ENCODE measurements at regions of chr13 and their contacts with region 1.

Region 1: GRCh38 chr13:98653463-98653985 is 76.6 kb upstream of the STK24 start:
- DNase-seq: peak; percentile 84 to 92 (median 85)
- H3K4me3 ChIP-seq: no peak overlapping the region
- H3K27ac ChIP-seq: no peak overlapping the region
- H3K4me1 ChIP-seq: no peaks in the 10 kb centered on the region
- H3K27me3 ChIP-seq: no peaks in the 10 kb centered on the region
- CTCF ChIP-seq: peak; percentile 87

Region 2: DNA sequence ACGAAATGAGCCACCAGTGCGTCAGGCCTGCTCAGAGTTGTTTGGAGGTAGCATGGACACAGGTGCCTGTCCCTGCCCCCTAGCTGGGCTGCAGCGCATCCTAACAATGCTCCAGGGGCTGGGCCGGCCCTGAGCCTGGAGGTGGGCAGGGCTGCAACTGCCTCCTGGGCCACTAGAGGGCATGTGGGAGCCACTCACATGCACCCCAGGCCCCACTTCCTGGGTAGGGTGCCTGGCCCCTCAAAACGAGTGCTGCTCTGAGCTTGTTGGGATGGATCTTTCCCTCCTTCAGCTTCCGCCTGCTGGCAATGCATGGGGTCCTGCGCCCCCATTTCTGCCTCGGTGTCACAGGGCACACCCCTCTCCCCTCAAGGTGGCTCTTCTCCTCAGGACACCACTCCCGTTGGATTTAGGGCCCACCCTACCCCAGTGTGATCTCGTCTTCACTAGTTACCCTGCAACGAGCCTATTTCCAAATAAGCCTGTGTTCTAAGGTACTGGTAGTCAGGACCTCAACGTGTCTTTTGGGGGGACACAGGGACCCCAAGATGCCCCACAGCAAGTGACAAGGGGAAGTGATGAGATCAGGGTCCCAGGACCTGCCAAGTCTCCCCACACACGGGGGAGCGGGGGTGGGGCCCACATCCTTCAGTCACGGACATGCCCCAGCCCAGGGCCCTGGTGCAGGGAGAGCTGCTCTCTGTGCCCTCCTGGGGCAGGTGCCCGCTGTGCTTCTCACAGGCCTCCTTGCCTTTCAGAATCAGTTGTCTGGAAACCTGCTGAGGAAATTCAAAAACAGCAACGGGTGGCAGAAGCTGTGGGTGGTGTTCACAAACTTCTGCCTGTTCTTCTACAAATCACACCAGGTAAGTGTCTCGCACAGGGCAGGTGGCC is 207.9 kb before region 1 on chr13:
- intact Hi-C with region 1: loop called (anchors 5 kb)
- DNase-seq: peak; percentile 58 to 87 (median 69)
- H3K4me3 ChIP-seq: no peak overlapping the region
- H3K27ac ChIP-seq: no peak overlapping the region
- H3K4me1 ChIP-seq: peaks cover 0 to 6% (median 5%) of the 10 kb centered on the region in 3 donors
- H3K27me3 ChIP-seq: no peaks in the 10 kb centered on the region
- CTCF ChIP-seq: peak; percentile 92